CD8-positive, alpha-beta T cell (primary cell): ENCODE measurements at regions of chr2 and their contacts with region 1.

Region 1: DNA sequence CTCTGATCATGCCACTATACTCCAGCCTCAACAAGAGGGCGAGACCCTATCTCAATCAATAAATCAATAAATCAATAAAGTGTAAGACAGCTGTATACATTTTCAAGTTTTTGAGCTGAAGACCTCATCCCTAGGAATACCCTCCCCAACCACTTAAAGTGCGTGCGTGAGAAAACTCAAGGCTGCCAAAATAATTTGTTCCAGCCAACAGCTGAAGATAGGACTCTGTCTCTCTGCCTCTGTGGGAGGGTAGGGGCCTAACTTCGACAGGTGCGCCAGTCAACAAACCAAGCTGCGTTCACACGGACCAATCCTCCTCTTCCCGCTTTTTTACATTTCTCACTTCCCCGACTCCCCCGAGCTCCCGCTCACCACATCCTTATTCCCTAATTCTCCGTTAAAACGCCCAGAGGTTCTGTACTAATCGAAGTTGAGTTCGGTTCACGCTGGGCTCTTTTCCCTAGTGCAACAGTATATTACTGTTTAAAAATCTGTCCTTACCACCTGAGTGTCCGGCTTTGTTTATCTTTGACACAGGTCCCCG is 618 bp downstream of the POLR2D start:
- DNase-seq: peak in 3 of 9 experiments; percentile 11 to 44 (median 22)
- ATAC-seq: no peak
- H3K4me3 ChIP-seq: peak overlapping the region; percentile 83 to 94
- H3K4me3 Mint-ChIP-seq: peak overlapping the region; percentile 90
- H3K27ac ChIP-seq: peak overlapping the region; percentile 76 to 82
- H3K27ac Mint-ChIP-seq: peak overlapping the region; percentile 85
- H3K4me1 ChIP-seq: peaks cover 28% of the 10 kb centered on the region
- H3K4me1 Mint-ChIP-seq: peaks cover 51% of the 10 kb centered on the region
- H3K27me3 ChIP-seq: no peaks in the 10 kb centered on the region
- H3K27me3 Mint-ChIP-seq: no peaks in the 10 kb centered on the region
- CTCF ChIP-seq: no peak

Region 2: GRCh38 chr2:127829845-127830246 is 27.5 kb before region 1 on chr2:
- CTCF ChIA-PET with region 1: interaction called, 3 read pairs
- POLR2A ChIA-PET with region 1: interaction called, 5 read pairs
- intact Hi-C with region 1: loop called in 1 of 2 experiments (anchors 2 kb)
- DNase-seq: peak; percentile 15 to 91 (median 54)
- ATAC-seq: peak; percentile 97
- H3K4me3 ChIP-seq: no peak overlapping the region
- H3K4me3 Mint-ChIP-seq: peak overlapping the region; percentile 29
- H3K27ac ChIP-seq: peak overlapping the region; percentile 31 to 75
- H3K27ac Mint-ChIP-seq: peak overlapping the region; percentile 81
- H3K4me1 ChIP-seq: peaks cover 21% of the 10 kb centered on the region
- H3K4me1 Mint-ChIP-seq: peaks cover 21% of the 10 kb centered on the region
- H3K27me3 ChIP-seq: no peaks in the 10 kb centered on the region
- H3K27me3 Mint-ChIP-seq: no peaks in the 10 kb centered on the region
- CTCF ChIP-seq: no peak

Region 3: GRCh38 chr2:127891811-127892210 is 34.5 kb after region 1 on chr2:
- CTCF ChIA-PET with region 1: no interaction called
- POLR2A ChIA-PET with region 1: interaction called, 4 read pairs
- intact Hi-C with region 1: loop called in 1 of 2 experiments (anchors 2 kb)
- DNase-seq: no peak
- ATAC-seq: no peak
- H3K4me3 ChIP-seq: no peak overlapping the region
- H3K4me3 Mint-ChIP-seq: no peak overlapping the region
- H3K27ac ChIP-seq: no peak overlapping the region
- H3K27ac Mint-ChIP-seq: peak overlapping the region; percentile 10
- H3K4me1 ChIP-seq: peaks cover 10% of the 10 kb centered on the region
- H3K4me1 Mint-ChIP-seq: peaks cover 31% of the 10 kb centered on the region
- H3K27me3 ChIP-seq: no peaks in the 10 kb centered on the region
- H3K27me3 Mint-ChIP-seq: no peaks in the 10 kb centered on the region
- CTCF ChIP-seq: no peak